GM12878 (cell line): ENCODE measurements at regions of chr1 and their contacts with region 1.

Region 1: DNA sequence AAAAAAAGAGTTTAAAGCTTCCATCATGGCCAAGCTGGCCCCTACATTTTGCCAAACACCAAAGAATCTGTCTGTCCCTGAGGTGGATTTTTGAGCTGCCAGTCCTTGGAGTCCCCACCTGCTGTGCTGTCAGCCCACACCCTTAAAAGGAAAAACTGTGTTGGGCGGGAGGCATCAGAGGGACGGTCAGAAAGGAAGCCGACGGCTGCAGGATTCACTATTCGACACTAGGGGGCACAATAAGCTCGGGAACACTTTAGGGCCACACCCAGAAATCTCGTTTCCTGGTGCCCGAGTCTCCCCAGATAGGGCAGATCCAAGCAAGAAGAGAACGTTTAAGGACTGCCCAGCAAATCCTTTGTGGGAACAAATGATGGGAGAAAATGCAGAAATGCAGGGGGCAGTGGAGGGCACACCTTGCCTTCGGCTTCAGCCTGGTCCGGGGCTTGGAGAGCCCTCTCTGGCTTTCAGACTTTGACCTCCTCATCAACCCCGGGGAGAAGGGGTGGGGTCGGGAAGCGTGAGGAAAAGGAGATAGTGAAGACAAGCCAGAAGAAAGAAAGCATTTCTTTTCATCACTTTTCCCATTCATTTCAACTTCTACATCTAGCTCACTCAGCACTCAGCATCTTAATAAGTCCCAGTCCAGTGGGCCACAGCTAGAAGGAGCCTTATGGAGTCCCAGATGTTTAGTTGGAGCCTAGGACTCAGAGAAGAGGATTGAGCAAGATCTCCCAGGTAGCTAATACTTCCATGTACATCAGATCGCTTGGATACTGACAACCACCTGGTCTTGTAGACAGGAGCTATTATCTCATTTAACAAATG is 5.0 kb upstream of the CTTNBP2NL start:
- DNase-seq: peak; percentile 63
- ATAC-seq: peak; percentile 81
- H3K4me3 ChIP-seq: peak overlapping the region; percentile 79
- H3K27ac ChIP-seq: no peak overlapping the region
- H3K4me1 ChIP-seq: peaks cover 18% of the 10 kb centered on the region
- H3K27me3 ChIP-seq: no peaks in the 10 kb centered on the region
- CTCF ChIP-seq: peak; percentile 88 to 96 (median 95)
- EP300 ChIP-seq: no peak
- POLR2A ChIP-seq: no peak
- RAD21 ChIP-seq: peak; percentile 94

Region 2: GRCh38 chr1:112335351-112335750 is 55.6 kb before region 1 on chr1:
- CTCF ChIA-PET with region 1: no interaction called
- POLR2A ChIA-PET with region 1: no interaction called
- RAD21 ChIA-PET with region 1: no interaction called
- SMC1A ChIA-PET with region 1: no interaction called
- in situ Hi-C with region 1: no loop called
- intact Hi-C with region 1: no loop called
- DNase-seq: no peak
- ATAC-seq: no peak
- H3K4me3 ChIP-seq: no peak overlapping the region
- H3K27ac ChIP-seq: no peak overlapping the region
- H3K4me1 ChIP-seq: no peaks in the 10 kb centered on the region
- H3K27me3 ChIP-seq: peaks cover 0 to 14% of the 10 kb centered on the region in 2 experiments; a peak in 1 of 4 replicates
- CTCF ChIP-seq: no peak
- EP300 ChIP-seq: no peak
- POLR2A ChIP-seq: no peak
- RAD21 ChIP-seq: no peak

Region 3: DNA sequence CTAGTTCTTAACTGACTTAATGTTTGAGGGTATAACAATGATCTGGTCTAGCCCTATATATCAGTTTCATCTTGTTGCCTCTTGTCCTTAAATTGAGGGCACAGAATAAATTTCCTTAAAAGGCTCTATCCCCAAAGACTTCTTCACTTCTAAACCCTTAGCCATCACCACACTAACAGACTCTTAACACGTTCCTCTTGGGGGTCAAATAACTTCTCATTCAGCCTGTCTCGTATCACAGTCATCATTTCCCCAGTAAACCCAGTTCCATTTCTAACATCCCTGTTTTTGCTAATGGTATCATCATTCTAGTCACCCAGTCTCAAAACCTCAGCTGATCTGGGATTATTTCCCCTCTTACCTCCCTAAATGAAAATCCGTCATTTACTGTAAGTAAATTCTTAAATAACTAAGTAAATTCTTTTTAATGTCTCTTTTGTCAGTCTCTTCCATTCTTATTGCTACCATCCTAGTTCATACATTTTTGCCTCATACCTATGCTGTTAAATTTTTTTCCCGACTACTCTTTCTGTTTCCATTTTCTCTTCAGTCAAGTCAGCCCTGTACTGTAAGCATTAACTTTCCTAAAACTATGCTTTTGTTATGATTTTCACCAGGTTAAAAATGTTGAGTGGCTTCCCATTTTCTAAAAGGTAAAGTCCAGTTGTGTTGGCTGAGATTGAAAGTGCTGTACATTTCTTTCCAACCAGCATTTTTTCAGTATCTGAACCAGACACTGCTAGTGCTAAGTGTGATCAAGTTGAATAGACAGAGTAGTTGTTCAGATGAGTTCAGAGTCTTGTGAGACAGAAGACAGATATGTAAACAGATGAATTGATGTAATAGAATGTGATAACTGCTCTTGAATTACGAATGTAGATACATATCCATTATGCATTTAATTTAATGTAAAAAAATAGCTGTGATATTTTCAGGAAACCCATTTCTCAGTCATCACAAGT is 12.0 kb after region 1 on chr1:
- CTCF ChIA-PET with region 1: interaction called, 15 read pairs
- POLR2A ChIA-PET with region 1: interaction called, 3 read pairs
- RAD21 ChIA-PET with region 1: interaction called, 10 read pairs
- SMC1A ChIA-PET with region 1: interaction called, 18 read pairs
- in situ Hi-C with region 1: no loop called
- intact Hi-C with region 1: no loop called
- DNase-seq: no peak
- ATAC-seq: peak; percentile 64
- H3K4me3 ChIP-seq: peak overlapping the region; percentile 38; the same call in 1 of the 2 replicates
- H3K27ac ChIP-seq: peak overlapping the region; percentile 41
- H3K4me1 ChIP-seq: peaks cover 7% of the 10 kb centered on the region
- H3K27me3 ChIP-seq: no peaks in the 10 kb centered on the region
- CTCF ChIP-seq: no peak
- EP300 ChIP-seq: no peak
- POLR2A ChIP-seq: no peak
- RAD21 ChIP-seq: no peak

Region 4: GRCh38 chr1:112445596-112445995 is 54.6 kb after region 1 on chr1:
- CTCF ChIA-PET with region 1: interaction called, 10 read pairs
- POLR2A ChIA-PET with region 1: no interaction called
- RAD21 ChIA-PET with region 1: interaction called, 4 read pairs
- SMC1A ChIA-PET with region 1: interaction called, 11 read pairs
- in situ Hi-C with region 1: no loop called
- intact Hi-C with region 1: no loop called
- DNase-seq: no peak
- ATAC-seq: no peak
- H3K4me3 ChIP-seq: no peak overlapping the region
- H3K27ac ChIP-seq: no peak overlapping the region
- H3K4me1 ChIP-seq: no peaks in the 10 kb centered on the region
- H3K27me3 ChIP-seq: no peaks in the 10 kb centered on the region
- CTCF ChIP-seq: no peak
- EP300 ChIP-seq: no peak
- POLR2A ChIP-seq: no peak
- RAD21 ChIP-seq: no peak

Region 5: GRCh38 chr1:112614460-112615065 is 223.6 kb after region 1 on chr1:
- CTCF ChIA-PET with region 1: interaction called, 330 read pairs
- POLR2A ChIA-PET with region 1: interaction called, 14 read pairs
- RAD21 ChIA-PET with region 1: interaction called, 49 read pairs
- SMC1A ChIA-PET with region 1: interaction called, 125 read pairs
- in situ Hi-C with region 1: loop called (anchors 5 kb)
- intact Hi-C with region 1: loop called (anchors 1 kb)
- DNase-seq: no peak
- ATAC-seq: peak; percentile 10; the same call in 1 of the 3 replicates
- H3K4me3 ChIP-seq: no peak overlapping the region
- H3K27ac ChIP-seq: no peak overlapping the region
- H3K4me1 ChIP-seq: peaks cover 4% of the 10 kb centered on the region
- H3K27me3 ChIP-seq: no peaks in the 10 kb centered on the region
- CTCF ChIP-seq: peak; percentile 49 to 63 (median 56)
- EP300 ChIP-seq: no peak
- POLR2A ChIP-seq: no peak
- RAD21 ChIP-seq: peak; percentile 78

Region 6: GRCh38 chr1:112674439-112674985 is 283.5 kb after region 1 on chr1 and contains the start of gene MOV10:
- CTCF ChIA-PET with region 1: interaction called, 27 read pairs
- POLR2A ChIA-PET with region 1: interaction called, 3 read pairs
- RAD21 ChIA-PET with region 1: interaction called, 13 read pairs
- SMC1A ChIA-PET with region 1: interaction called, 12 read pairs
- in situ Hi-C with region 1: no loop called
- intact Hi-C with region 1: no loop called
- DNase-seq: peak; percentile 40
- ATAC-seq: peak; percentile 81
- H3K4me3 ChIP-seq: peak within 1 kb of the TSS; percentile 86
- H3K27ac ChIP-seq: peak within 1 kb of the TSS; percentile 81
- H3K4me1 ChIP-seq: peaks cover 9% of the 10 kb centered on the region
- H3K27me3 ChIP-seq: no peaks in the 10 kb centered on the region
- CTCF ChIP-seq: no peak
- EP300 ChIP-seq: 0 out of 4 replicates have a peak, but pooled peaks of 1 of the 2 experiments have one; percentile 16
- POLR2A ChIP-seq: peak; percentile 74
- RAD21 ChIP-seq: no peak
- polyA plus RNA-seq, gene MOV10: 21.0 to 28.6 TPM

Region 7: GRCh38 chr1:112809253-112809684 is 418.3 kb after region 1 on chr1:
- CTCF ChIA-PET with region 1: interaction called, 21 read pairs
- POLR2A ChIA-PET with region 1: no interaction called
- RAD21 ChIA-PET with region 1: interaction called, 8 read pairs
- SMC1A ChIA-PET with region 1: no interaction called
- in situ Hi-C with region 1: loop called (anchors 5 kb)
- intact Hi-C with region 1: loop called (anchors 2 kb)
- DNase-seq: no peak
- ATAC-seq: peak; percentile 96
- H3K4me3 ChIP-seq: no peak overlapping the region
- H3K27ac ChIP-seq: no peak overlapping the region
- H3K4me1 ChIP-seq: no peaks in the 10 kb centered on the region
- H3K27me3 ChIP-seq: peaks cover 0 to 4% of the 10 kb centered on the region in 2 experiments; a peak in 1 of 4 replicates
- CTCF ChIP-seq: peak; percentile 86 to 96 (median 88)
- EP300 ChIP-seq: no peak
- POLR2A ChIP-seq: no peak
- RAD21 ChIP-seq: peak; percentile 76